Endothelial cell of umbilical vein (primary cell): ENCODE measurements at regions of chr7 and their contacts with region 1.

Region 1: DNA sequence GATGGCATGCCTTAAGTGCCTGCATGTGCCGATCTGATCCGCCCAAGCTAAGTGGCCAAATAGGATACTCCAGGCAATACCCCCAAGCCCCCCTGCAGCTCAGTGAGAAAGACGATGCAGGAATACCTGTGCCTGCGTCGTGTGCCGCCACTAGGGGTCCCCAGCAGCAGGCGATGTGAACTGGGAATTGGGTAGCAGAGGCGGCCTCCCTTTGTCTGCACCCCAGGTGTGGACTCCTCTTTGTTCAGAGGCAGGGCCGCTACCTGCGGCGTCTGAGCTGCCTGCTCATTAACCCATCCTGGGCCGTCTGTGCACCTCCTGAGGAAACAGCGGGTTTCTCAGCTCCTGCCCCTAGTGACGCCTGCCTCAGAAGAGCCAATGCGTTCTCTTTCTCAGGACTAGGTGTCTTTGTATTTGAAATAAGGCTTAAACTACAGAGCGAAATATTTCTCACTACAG is 4.8 kb upstream of the CHN2 start:
- DNase-seq: peak; percentile 49
- H3K4me3 ChIP-seq: no peak overlapping the region
- H3K27ac ChIP-seq: no peak overlapping the region
- H3K4me1 ChIP-seq: peaks cover 3% of the 10 kb centered on the region
- H3K27me3 ChIP-seq: peaks cover 11 to 19% of the 10 kb centered on the region in 2 experiments
- CTCF ChIP-seq: peak; percentile 71 to 96
- POLR2A ChIP-seq: no peak

Region 2: GRCh38 chr7:28926871-28927597 is 262.7 kb before region 1 on chr7:
- CTCF ChIA-PET with region 1: interaction called, 48 read pairs
- POLR2A ChIA-PET with region 1: no interaction called
- dilution Hi-C with region 1: no loop called
- intact Hi-C with region 1: loop called (anchors 1 kb)
- DNase-seq: peak; percentile 83
- H3K4me3 ChIP-seq: peak overlapping the region; percentile 29 to 75 (median 70)
- H3K27ac ChIP-seq: no peak overlapping the region
- H3K4me1 ChIP-seq: no peaks in the 10 kb centered on the region
- H3K27me3 ChIP-seq: peaks cover 4 to 6% of the 10 kb centered on the region in 2 experiments
- CTCF ChIP-seq: peak; percentile 67 to 81
- POLR2A ChIP-seq: no peak

Region 3: DNA sequence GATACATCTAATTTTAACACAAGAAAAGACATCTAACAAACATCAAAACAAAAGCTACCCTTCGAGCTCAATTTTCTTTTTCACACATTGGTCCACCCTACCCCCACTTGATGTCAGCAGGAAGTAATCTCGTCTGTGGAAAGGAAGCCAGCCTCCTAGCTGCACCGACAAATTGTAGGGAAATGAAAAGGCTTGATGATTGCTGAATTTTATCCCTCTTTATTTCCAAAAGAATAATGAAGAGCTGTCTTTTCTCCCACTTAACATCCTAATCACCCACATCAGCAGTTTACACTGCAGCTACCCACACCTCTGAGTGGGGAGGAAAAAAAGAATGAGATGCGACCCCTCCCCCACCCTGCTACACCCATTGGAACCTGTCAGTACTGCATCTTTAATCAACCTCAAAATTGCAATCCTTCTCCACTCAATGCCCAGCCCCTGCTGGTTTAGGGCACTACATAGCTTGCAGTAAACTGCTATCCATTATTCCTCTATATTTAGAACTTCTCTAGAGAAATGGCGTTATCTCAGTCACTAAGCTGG is 32.8 kb before region 1 on chr7:
- CTCF ChIA-PET with region 1: interaction called, 13 read pairs
- POLR2A ChIA-PET with region 1: no interaction called
- dilution Hi-C with region 1: no loop called
- intact Hi-C with region 1: no loop called
- DNase-seq: no peak
- H3K4me3 ChIP-seq: no peak overlapping the region
- H3K27ac ChIP-seq: no peak overlapping the region
- H3K4me1 ChIP-seq: no peaks in the 10 kb centered on the region
- H3K27me3 ChIP-seq: peaks cover 12 to 17% of the 10 kb centered on the region in 2 experiments
- CTCF ChIP-seq: no peak
- POLR2A ChIP-seq: no peak

Region 4: GRCh38 chr7:29207162-29207801 is 17.5 kb after region 1 on chr7:
- CTCF ChIA-PET with region 1: interaction called, 51 read pairs
- POLR2A ChIA-PET with region 1: no interaction called
- dilution Hi-C with region 1: no loop called
- intact Hi-C with region 1: no loop called
- DNase-seq: peak; percentile 31
- H3K4me3 ChIP-seq: no peak overlapping the region
- H3K27ac ChIP-seq: no peak overlapping the region
- H3K4me1 ChIP-seq: peaks cover 5% of the 10 kb centered on the region
- H3K27me3 ChIP-seq: peaks cover 0 to 3% of the 10 kb centered on the region in 2 experiments
- CTCF ChIP-seq: no peak
- POLR2A ChIP-seq: no peak

Region 5: DNA sequence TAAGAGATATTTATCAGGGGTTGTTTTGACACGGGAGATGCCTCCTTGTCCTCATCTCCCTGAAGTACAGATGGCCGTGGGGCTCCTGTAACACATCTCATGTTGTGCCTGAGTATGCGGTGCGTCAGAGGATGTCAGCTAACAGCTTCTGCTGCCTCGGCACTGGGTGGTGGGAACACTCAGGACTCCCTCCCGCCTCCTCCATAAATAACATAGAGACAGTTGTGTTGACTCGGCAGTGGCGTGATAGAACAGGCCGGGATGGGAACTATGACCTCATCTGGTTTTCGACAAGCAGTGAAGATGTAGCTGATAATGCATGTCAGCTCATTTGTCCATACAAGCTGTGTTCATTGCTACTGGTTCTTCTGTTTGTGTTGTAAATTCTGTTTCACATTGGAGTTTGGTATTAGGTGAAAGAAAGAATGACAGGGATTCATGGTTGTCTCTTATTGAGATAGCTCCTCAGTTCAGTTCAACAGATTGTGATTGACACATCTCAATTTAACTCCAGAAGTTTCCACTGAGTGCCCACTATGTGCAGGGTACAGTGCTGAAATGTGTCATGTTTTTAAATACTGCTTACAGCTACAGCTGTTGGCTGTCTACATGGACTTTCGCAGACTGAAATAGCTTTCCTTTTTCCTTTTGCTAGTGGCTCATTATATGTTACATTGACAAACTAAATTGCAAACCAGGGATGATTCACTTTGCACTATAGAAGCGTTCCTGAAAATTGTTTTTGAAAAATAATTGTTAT is 92.2 kb after region 1 on chr7:
- CTCF ChIA-PET with region 1: interaction called, 13 read pairs
- POLR2A ChIA-PET with region 1: no interaction called
- dilution Hi-C with region 1: no loop called
- intact Hi-C with region 1: no loop called
- DNase-seq: no peak
- H3K4me3 ChIP-seq: no peak overlapping the region
- H3K27ac ChIP-seq: no peak overlapping the region
- H3K4me1 ChIP-seq: peaks cover under 1% of the 10 kb centered on the region
- H3K27me3 ChIP-seq: no peaks in the 10 kb centered on the region
- CTCF ChIP-seq: no peak
- POLR2A ChIP-seq: no peak

Region 6: DNA sequence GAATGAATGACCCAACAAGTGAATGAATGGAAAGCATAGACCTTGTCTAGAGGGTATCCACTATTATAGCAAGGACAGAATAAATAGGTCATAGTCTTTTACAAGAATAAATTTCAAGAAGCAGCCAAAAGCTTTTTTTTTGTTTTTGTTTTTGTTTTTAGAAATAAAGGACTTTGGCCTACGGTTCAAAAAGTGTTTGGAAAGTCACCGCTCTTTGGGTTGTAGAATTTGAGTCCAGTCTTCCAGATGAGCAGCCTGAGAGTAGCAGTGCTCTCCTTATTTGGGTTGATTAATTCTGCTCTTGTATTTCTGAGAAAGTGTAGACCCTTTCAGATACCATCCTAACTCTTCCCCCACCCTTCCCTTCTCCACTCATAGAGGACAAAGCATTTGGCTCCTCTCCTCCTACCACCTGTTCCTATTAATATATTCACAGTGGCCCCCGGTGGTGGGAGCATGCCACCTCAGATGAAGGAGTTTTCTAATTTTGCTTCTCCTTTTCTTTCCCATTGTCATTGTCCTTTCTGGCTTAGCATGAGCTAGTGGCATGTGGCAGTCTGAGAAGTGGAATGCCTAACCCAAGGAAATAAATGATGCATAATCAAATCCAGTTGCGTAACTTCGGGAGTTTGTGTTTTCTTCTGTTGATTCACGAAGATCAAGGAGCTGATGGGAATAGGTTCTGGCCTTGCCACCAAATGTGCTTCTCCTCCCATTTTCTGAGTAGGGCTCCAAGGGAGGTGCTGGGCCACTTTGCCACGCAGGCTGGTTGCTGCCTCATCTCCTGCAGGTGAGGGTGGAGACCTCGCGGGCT is 119.5 kb after region 1 on chr7:
- CTCF ChIA-PET with region 1: interaction called, 67 read pairs
- POLR2A ChIA-PET with region 1: no interaction called
- dilution Hi-C with region 1: no loop called
- intact Hi-C with region 1: loop called (anchors 1 kb)
- DNase-seq: peak; percentile 28
- H3K4me3 ChIP-seq: no peak overlapping the region
- H3K27ac ChIP-seq: no peak overlapping the region
- H3K4me1 ChIP-seq: peaks cover 19% of the 10 kb centered on the region
- H3K27me3 ChIP-seq: peaks cover 14% of the 10 kb centered on the region in 2 experiments
- CTCF ChIP-seq: peak; percentile 18 to 34
- POLR2A ChIP-seq: no peak

Region 7: DNA sequence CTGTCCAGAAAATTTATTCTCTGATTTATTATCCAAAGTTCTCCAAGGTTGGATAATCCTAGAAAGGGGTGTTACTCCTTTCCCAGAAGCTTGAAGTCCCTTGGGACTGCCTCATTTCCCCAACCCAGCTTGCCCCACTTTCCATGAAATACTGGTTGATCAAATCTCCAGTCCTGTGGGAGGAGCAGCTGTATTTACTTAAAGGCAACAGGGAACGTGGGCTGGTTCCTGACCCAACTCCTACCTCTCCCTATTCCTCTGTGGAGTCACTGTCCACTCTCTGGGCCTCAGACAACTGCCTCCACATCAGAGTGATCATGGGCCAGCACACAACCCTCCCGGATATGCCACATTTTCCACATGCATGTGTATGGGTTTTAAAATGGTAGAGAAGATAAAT is 207.6 kb after region 1 on chr7:
- CTCF ChIA-PET with region 1: interaction called, 12 read pairs
- POLR2A ChIA-PET with region 1: no interaction called
- dilution Hi-C with region 1: no loop called
- intact Hi-C with region 1: no loop called
- DNase-seq: no peak
- H3K4me3 ChIP-seq: no peak overlapping the region
- H3K27ac ChIP-seq: no peak overlapping the region
- H3K4me1 ChIP-seq: no peaks in the 10 kb centered on the region
- H3K27me3 ChIP-seq: peaks cover 0 to under 1% of the 10 kb centered on the region in 2 experiments
- CTCF ChIP-seq: no peak
- POLR2A ChIP-seq: no peak